Activated T-helper 1 cell treated with anti-CD3 and anti-CD28 coated beads, Interleukin-12 subunit alpha, Interleukin-12 subunit beta, Interleukin-2, Interleukin-4 antibody, amounts not matched to agents 30 ng/mL and 10 ng/mL and 1 ng/mL, durations not matched to agents 14 hours and 24 hours and 36 hours (primary cell): ENCODE measurements at regions of chr1 and their contacts with region 1.

Region 1: GRCh38 chr1:12019858-12020509 is 686 bp downstream of the MIIP start:
- DNase-seq: no peak
- H3K4me3 Mint-ChIP-seq: peak overlapping the region; percentile 82
- H3K27ac Mint-ChIP-seq: peak overlapping the region; percentile 55
- H3K4me1 Mint-ChIP-seq: peaks cover 23% of the 10 kb centered on the region
- H3K27me3 Mint-ChIP-seq: no peaks in the 10 kb centered on the region

Region 2: DNA sequence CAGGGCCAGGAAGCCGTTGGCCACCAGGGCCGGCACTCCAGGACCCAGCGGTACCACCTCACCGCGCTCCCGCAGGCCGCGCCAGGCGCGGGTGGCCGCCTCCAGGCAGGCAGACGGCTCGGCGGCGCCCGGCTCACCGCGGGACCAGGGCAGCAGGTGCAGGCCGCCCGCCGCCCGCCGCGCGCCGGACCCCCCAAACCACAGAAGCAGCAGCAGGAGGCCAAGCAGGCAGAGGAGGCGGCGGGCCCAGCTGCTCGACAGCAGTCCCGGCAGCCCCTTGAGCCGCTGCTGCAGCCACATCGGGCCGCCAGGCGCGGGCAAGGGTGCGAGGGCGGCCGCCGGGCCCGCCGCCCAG is 94.1 kb before region 1 on chr1:
- intact Hi-C with region 1: loop called (anchors 1 kb)
- DNase-seq: no peak
- H3K4me3 Mint-ChIP-seq: no peak overlapping the region
- H3K27ac Mint-ChIP-seq: no peak overlapping the region
- H3K4me1 Mint-ChIP-seq: peaks cover 26% of the 10 kb centered on the region
- H3K27me3 Mint-ChIP-seq: no peaks in the 10 kb centered on the region

Region 3: DNA sequence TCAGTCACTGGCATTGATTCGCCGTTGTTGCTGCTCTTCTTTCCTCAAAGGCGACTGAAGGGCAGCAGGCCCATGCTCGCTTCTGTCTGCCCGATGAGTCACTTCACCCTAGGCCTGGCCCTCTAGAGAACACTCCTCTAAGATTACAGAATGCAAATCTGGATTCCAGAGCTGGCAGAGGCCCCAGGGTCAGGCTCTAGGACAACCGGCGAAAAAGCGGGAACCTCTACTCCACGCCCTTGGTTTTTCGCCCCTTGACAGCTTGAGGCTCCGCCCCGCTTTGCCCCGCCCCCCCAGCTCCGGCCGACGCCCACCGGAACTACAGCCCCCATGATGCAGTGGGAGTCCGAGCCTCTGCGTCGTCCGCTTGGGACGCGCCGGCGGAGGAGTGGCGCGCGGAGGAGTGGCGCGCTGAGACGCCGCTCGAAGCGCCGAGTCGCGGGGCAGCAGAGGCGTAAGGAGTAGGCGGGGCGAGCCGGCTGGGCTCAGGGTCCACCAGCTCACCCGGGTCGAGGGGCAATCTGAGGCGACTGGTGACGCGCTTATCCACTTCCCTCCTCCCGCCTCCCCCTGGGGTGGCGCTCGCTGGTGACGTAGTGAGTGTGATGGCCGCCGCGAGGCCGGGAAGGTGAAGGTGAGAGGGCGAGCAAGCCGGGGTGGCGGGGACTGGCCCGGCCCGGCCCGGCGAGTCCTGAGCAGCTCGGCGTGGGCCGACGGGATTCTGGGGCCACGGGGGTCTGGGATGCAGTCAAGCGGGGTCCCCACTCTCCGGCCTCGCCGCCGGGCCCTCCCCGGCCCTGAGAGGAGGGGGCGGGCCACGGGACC is 39.9 kb before region 1 on chr1 and contains the start of gene MFN2:
- intact Hi-C with region 1: loop called (anchors 1 kb)
- DNase-seq: peak; percentile 89
- H3K4me3 Mint-ChIP-seq: peak within 1 kb of the TSS; percentile 98
- H3K27ac Mint-ChIP-seq: peak within 1 kb of the TSS; percentile 98
- H3K4me1 Mint-ChIP-seq: peaks cover 36% of the 10 kb centered on the region
- H3K27me3 Mint-ChIP-seq: no peaks in the 10 kb centered on the region
- total RNA-seq, gene MFN2: 88.1 and 95.4 TPM in 2 replicates

Region 4: DNA sequence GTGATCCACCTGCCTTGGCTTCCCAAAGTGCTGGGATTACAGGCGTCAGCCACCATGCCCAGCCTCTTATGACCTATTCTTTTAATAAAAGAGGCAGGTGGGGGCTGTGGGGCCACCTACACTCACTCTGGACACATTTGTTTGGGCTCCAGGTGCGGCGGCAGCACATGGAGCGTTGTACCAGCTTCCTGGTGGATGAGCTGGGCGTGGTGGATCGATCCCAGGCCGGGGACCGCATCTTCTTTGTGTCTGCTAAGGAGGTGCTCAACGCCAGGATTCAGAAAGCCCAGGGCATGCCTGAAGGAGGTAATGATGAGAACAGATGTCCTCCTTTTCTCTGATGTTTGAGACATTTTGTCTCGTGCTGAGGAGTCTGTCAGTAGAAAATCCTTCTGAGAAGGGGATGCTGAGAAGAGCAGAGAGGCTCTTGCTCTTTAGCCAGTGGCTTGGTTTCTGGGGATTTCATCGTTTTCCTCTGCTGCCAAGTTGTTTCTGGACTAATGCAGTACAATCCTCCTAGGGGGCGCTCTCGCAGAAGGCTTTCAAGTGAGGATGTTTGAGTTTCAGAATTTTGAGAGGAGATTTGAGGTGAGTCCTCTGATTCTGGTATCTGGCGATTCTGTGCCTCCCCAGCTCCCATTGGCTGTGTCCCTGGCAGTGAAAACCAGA is 18.6 kb before region 1 on chr1:
- intact Hi-C with region 1: loop called (anchors 2 kb)
- DNase-seq: peak; percentile 34
- H3K4me3 Mint-ChIP-seq: no peak overlapping the region
- H3K27ac Mint-ChIP-seq: peak overlapping the region; percentile 18
- H3K4me1 Mint-ChIP-seq: peaks cover 23% of the 10 kb centered on the region
- H3K27me3 Mint-ChIP-seq: no peaks in the 10 kb centered on the region

Region 5: GRCh38 chr1:12040457-12041051 is 20.6 kb after region 1 on chr1:
- intact Hi-C with region 1: loop called (anchors 1 kb)
- DNase-seq: no peak
- H3K4me3 Mint-ChIP-seq: no peak overlapping the region
- H3K27ac Mint-ChIP-seq: peak overlapping the region; percentile 29
- H3K4me1 Mint-ChIP-seq: peaks cover 48% of the 10 kb centered on the region
- H3K27me3 Mint-ChIP-seq: no peaks in the 10 kb centered on the region

Region 6: GRCh38 chr1:12047120-12047876 is 27.3 kb after region 1 on chr1:
- intact Hi-C with region 1: loop called (anchors 2 kb)
- DNase-seq: peak; percentile 71
- H3K4me3 Mint-ChIP-seq: no peak overlapping the region
- H3K27ac Mint-ChIP-seq: no peak overlapping the region
- H3K4me1 Mint-ChIP-seq: peaks cover 18% of the 10 kb centered on the region
- H3K27me3 Mint-ChIP-seq: no peaks in the 10 kb centered on the region